Heart left ventricle (tissue), 16 donors: ENCODE measurements at regions of chr15 and their contacts with region 1.

Region 1: DNA sequence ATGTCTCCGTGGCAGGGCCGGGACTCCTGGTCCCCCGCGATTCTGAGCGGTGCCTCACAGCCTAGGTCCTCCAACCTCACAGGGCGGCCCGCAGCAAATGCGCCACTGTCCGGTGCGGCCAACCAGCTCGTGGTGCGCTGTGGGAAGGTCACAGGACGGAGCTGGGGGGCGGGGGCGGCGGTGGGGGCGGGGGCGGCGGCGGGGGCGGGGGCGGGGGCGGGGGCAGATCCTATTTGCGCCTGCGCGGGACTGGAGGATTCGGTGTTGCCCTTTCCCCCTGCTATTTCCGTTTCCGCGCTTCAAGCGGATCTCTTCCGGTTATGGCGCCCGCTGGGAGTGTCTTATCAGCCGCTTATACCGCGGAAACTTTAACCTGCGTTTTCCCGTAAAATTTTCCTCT is 106.7 kb upstream of the SNRPN start:
- DNase-seq: peak; percentile 37 to 68 (median 57)
- ATAC-seq: peak; percentile 83 to 90 (median 86)
- H3K4me3 ChIP-seq: peak overlapping the region in 10 of 12 donors; percentile 25 to 56 (median 40)
- H3K27ac ChIP-seq: peak overlapping the region in 8 of 12 donors; percentile 32 to 72 (median 57)
- H3K4me1 ChIP-seq: no peaks in the 10 kb centered on the region
- H3K27me3 ChIP-seq: no peaks in the 10 kb centered on the region
- CTCF ChIP-seq: no peak
- POLR2A ChIP-seq: no peak

Region 2: GRCh38 chr15:24761704-24762302 is 86.2 kb before region 1 on chr15:
- intact Hi-C with region 1: loop called in 1 of 10 experiments (anchors 10 kb)
- DNase-seq: no peak
- ATAC-seq: no peak
- H3K4me3 ChIP-seq: no peak overlapping the region
- H3K27ac ChIP-seq: no peak overlapping the region
- H3K4me1 ChIP-seq: no peaks in the 10 kb centered on the region
- H3K27me3 ChIP-seq: peaks cover 0 to 6% (median 0%) of the 10 kb centered on the region in 9 donors
- CTCF ChIP-seq: peak in 11 of 12 donors; percentile 21 to 61 (median 41)
- POLR2A ChIP-seq: no peak

Region 3: DNA sequence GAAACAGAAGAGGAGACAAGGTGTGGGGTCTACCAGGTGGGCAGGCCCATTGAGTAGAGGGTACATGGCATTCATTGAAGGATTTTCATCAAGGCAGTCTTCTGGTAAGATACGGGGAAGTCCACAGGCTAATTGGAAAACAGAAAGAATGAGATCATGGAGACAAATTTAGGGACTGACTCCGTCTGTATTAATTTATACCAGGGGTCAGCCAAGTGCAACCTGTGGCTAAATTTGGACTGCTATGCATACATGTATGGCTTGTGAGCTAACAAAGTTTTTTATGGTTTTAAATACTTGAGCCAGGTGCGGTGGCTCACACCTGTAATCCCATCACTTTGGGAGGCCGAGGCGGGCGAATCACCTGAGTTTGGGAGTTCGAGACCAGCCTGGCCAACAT is 85.7 kb after region 1 on chr15:
- intact Hi-C with region 1: no loop called
- DNase-seq: peak in 3 of 5 donors; percentile 9 to 33 (median 19)
- ATAC-seq: peak; percentile 82 to 91 (median 84)
- H3K4me3 ChIP-seq: no peak overlapping the region
- H3K27ac ChIP-seq: peak overlapping the region in 8 of 12 donors; percentile 24 to 86 (median 70)
- H3K4me1 ChIP-seq: peaks cover 0 to 4% (median 0%) of the 10 kb centered on the region in 12 donors
- H3K27me3 ChIP-seq: no peaks in the 10 kb centered on the region
- CTCF ChIP-seq: no peak
- POLR2A ChIP-seq: no peak